T-cell (primary cell): ENCODE measurements at regions of chr6 and their contacts with region 1.

Region 1: GRCh38 chr6:72811971-72812421 is 190.1 kb downstream of the KCNQ5 start:
- DNase-seq: no peak
- ATAC-seq: no peak
- H3K4me3 ChIP-seq: no peak overlapping the region
- H3K4me3 Mint-ChIP-seq: no peak overlapping the region
- H3K27ac ChIP-seq: no peak overlapping the region
- H3K27ac Mint-ChIP-seq: no peak overlapping the region
- H3K4me1 ChIP-seq: peaks cover 0 to 4% of the 10 kb centered on the region in 2 experiments
- H3K4me1 Mint-ChIP-seq: peaks cover 0 to 4% (median 4%) of the 10 kb centered on the region in 3 donors
- H3K27me3 ChIP-seq: no peaks in the 10 kb centered on the region
- H3K27me3 Mint-ChIP-seq: no peaks in the 10 kb centered on the region

Region 2: GRCh38 chr6:72787391-72788031 is 24.5 kb before region 1 on chr6:
- CTCF ChIA-PET with region 1: no interaction called
- POLR2A ChIA-PET with region 1: interaction called in 1 of 2 experiments, 11 read pairs
- DNase-seq: no peak
- ATAC-seq: no peak
- H3K4me3 ChIP-seq: no peak overlapping the region
- H3K4me3 Mint-ChIP-seq: no peak overlapping the region
- H3K27ac ChIP-seq: no peak overlapping the region
- H3K27ac Mint-ChIP-seq: no peak overlapping the region
- H3K4me1 ChIP-seq: no peaks in the 10 kb centered on the region
- H3K4me1 Mint-ChIP-seq: no peaks in the 10 kb centered on the region
- H3K27me3 ChIP-seq: no peaks in the 10 kb centered on the region
- H3K27me3 Mint-ChIP-seq: no peaks in the 10 kb centered on the region